ENCODE measurements at regions of chr18 and their contacts with region 1.

Region 1: GRCh38 chr18:49944663-49945062 is 131.3 kb upstream of the ACAA2 start:
- DNase-seq: peak in 2 of 9 donors; percentile 16 to 28
- ATAC-seq: peak; percentile 32
- H3K4me3 ChIP-seq: no peak overlapping the region
- H3K4me3 Mint-ChIP-seq: no peak overlapping the region
- H3K27ac ChIP-seq: no peak overlapping the region
- H3K27ac Mint-ChIP-seq: peak overlapping the region in 2 of 9 donors; percentile 9 to 68
- H3K4me1 ChIP-seq: peaks cover under 1 to 11% of the 10 kb centered on the region in 2 donors
- H3K4me1 Mint-ChIP-seq: peaks cover 0 to 23% (median 10%) of the 10 kb centered on the region in 7 donors
- H3K27me3 ChIP-seq: no peaks in the 10 kb centered on the region
- H3K27me3 Mint-ChIP-seq: peaks cover 0 to 16% (median 3%) of the 10 kb centered on the region in 5 donors

Region 2: DNA sequence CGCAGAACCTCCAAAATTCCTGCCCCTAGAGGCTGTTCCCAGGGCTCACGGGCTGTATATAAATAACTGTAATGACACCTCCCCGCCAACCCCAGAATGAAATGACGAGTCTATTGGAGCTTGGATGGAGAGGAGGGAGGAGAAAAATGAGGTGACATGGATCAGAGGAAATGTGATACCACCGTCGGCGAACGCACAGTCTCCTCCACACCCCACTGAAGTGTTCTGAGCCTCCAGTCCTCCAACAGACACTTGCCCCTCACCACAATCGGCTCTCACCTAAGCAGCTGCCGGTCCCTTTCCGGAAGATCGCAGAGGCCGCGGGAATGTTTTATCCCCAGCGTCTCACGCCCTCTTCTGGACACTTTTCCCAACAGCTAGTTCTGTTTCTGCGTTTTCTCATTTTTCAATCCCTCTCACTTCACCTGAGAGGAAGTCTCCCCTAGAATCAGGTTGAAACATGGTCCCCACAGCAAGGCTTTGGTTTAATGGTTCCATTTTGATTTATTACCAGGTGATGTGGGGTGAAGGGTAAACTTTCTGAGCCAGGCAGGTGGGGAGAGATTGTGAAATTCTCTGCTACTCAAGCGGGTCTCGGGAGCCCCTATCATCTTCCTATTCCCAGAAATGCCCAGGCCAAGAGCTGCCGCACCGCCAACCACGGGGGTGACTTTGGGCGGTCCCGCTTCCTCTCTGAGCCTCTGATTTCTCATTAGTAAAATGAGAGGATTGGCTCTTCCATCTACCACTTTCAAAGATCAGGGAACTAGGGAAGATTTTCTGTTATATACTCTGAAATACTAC is 259.3 kb after region 1 on chr18:
- CTCF ChIA-PET with region 1: no interaction called
- POLR2A ChIA-PET with region 1: no interaction called
- intact Hi-C with region 1: loop called in 1 of 2 experiments (anchors 10 kb)
- DNase-seq: peak in 2 of 9 donors; percentile 17 to 28
- ATAC-seq: no peak
- H3K4me3 ChIP-seq: no peak overlapping the region
- H3K4me3 Mint-ChIP-seq: peak overlapping the region in 6 of 10 donors; percentile 20 to 61 (median 32)
- H3K27ac ChIP-seq: no peak overlapping the region
- H3K27ac Mint-ChIP-seq: no peak overlapping the region
- H3K4me1 ChIP-seq: no peaks in the 10 kb centered on the region
- H3K4me1 Mint-ChIP-seq: peaks cover 5 to 12% (median 9%) of the 10 kb centered on the region in 7 donors
- H3K27me3 ChIP-seq: peaks cover 0 to 3% of the 10 kb centered on the region in 2 donors
- H3K27me3 Mint-ChIP-seq: peaks cover 48 to 61% (median 57%) of the 10 kb centered on the region in 5 donors

Region 3: GRCh38 chr18:50527636-50528307 is 583.1 kb after region 1 on chr18:
- CTCF ChIA-PET with region 1: no interaction called
- POLR2A ChIA-PET with region 1: no interaction called
- intact Hi-C with region 1: no loop called
- DNase-seq: no peak
- ATAC-seq: no peak
- H3K4me3 ChIP-seq: no peak overlapping the region
- H3K4me3 Mint-ChIP-seq: no peak overlapping the region
- H3K27ac ChIP-seq: no peak overlapping the region
- H3K27ac Mint-ChIP-seq: no peak overlapping the region
- H3K4me1 ChIP-seq: no peaks in the 10 kb centered on the region
- H3K4me1 Mint-ChIP-seq: no peaks in the 10 kb centered on the region
- H3K27me3 ChIP-seq: no peaks in the 10 kb centered on the region
- H3K27me3 Mint-ChIP-seq: peaks cover under 1 to 37% (median 22%) of the 10 kb centered on the region in 5 donors

Measured in naive thymus-derived CD4-positive, alpha-beta T cell (primary cell).